ENCODE measurements at regions of chr14 and their contacts with region 1.

Region 1: GRCh38 chr14:55446218-55446654 is 5.8 kb upstream of the TBPL2 start:
- DNase-seq: peak; percentile 61 to 80
- ATAC-seq: peak; percentile 54 to 72; a peak in 5 of 6 replicates
- H3K4me3 ChIP-seq: no peak overlapping the region
- H3K27ac ChIP-seq: peak overlapping the region; percentile 71 to 88; a peak in 5 of 6 replicates
- H3K4me1 ChIP-seq: peaks cover 38% of the 10 kb centered on the region
- CTCF ChIP-seq: peak; percentile 83
- EP300 ChIP-seq: no peak
- POLR2A ChIP-seq: no peak
- RAD21 ChIP-seq: peak; percentile 81 to 88

Region 2: GRCh38 chr14:55191203-55192053 is 254.8 kb before region 1 on chr14 and contains the start of gene DLGAP5:
- CTCF ChIA-PET with region 1: no interaction called
- POLR2A ChIA-PET with region 1: no interaction called
- DNase-seq: peak; percentile 96
- ATAC-seq: peak; percentile 98 to 99
- H3K4me3 ChIP-seq: peak within 1 kb of the TSS; percentile 86
- H3K27ac ChIP-seq: peak within 1 kb of the TSS; percentile 73 to 84
- H3K4me1 ChIP-seq: peaks cover 13% of the 10 kb centered on the region
- CTCF ChIP-seq: no peak
- EP300 ChIP-seq: no peak
- POLR2A ChIP-seq: peak; percentile 57
- RAD21 ChIP-seq: no peak
- polyA plus RNA-seq, gene DLGAP5: 28.5 and 46.6 TPM in 2 replicates

Region 3: DNA sequence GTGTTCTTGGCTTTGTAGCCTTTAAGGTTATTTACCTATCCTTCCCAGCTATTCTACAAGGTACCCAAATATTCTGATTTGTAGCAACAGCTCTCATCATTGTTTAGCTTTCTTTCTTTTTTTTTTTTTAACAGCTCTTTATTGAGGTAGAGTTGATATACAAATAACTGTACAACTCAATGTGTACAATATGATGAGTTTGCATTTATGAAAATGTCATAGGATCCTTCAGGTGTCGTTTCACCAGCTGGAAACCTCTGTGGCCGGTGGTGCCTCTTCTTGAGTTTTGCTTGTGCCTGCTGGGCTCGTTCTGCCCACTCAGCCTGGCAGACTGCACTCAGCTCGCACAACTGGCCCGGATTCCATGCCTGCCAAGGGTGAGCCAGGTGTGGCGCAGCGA is 21.1 kb after region 1 on chr14:
- CTCF ChIA-PET with region 1: interaction called, 19 read pairs
- POLR2A ChIA-PET with region 1: no interaction called
- DNase-seq: no peak
- ATAC-seq: no peak
- H3K4me3 ChIP-seq: no peak overlapping the region
- H3K27ac ChIP-seq: no peak overlapping the region
- H3K4me1 ChIP-seq: peaks cover 8% of the 10 kb centered on the region
- CTCF ChIP-seq: no peak
- EP300 ChIP-seq: no peak
- POLR2A ChIP-seq: no peak
- RAD21 ChIP-seq: no peak

Region 4: GRCh38 chr14:55588259-55588699 is 142.0 kb after region 1 on chr14:
- CTCF ChIA-PET with region 1: interaction called, 10 read pairs
- POLR2A ChIA-PET with region 1: no interaction called
- DNase-seq: no peak
- ATAC-seq: peak in 1 of 2 experiments; percentile 21; a peak in 3 of 6 replicates
- H3K4me3 ChIP-seq: no peak overlapping the region
- H3K27ac ChIP-seq: peak overlapping the region; percentile 18 to 53; a peak in 4 of 6 replicates
- H3K4me1 ChIP-seq: peaks cover 91% of the 10 kb centered on the region
- CTCF ChIP-seq: no peak
- EP300 ChIP-seq: no peak
- POLR2A ChIP-seq: no peak
- RAD21 ChIP-seq: no peak

Region 5: DNA sequence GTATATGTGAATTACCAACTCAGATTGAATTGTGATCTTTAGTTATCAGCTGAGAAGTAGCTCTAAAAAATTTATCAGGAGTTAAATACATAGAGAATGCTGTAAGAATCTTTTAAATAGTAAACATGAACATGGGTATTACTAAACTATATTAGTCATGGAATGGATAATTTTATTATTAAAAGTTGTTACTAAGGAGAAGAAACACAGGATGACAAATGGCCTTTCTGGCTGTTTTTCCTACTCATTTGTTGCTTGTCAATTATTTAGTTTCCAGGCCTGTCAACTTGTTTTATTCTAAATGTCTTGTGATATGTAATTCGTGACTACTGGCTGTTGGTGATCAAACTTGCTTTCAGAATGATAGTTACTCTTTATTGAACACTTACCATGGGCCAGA is 192.4 kb after region 1 on chr14:
- CTCF ChIA-PET with region 1: interaction called, 15 read pairs
- POLR2A ChIA-PET with region 1: no interaction called
- DNase-seq: no peak
- ATAC-seq: no peak
- H3K4me3 ChIP-seq: no peak overlapping the region
- H3K27ac ChIP-seq: no peak overlapping the region
- H3K4me1 ChIP-seq: no peaks in the 10 kb centered on the region
- CTCF ChIP-seq: no peak
- EP300 ChIP-seq: no peak
- POLR2A ChIP-seq: no peak
- RAD21 ChIP-seq: no peak

Measured in A549 (cell line).